Endothelial cell of umbilical vein (primary cell): ENCODE measurements at regions of chr6 and their contacts with region 1.

Region 1: GRCh38 chr6:137271245-137272183 is 52.3 kb upstream of the IFNGR1 start:
- DNase-seq: peak; percentile 72
- H3K4me3 ChIP-seq: no peak overlapping the region
- H3K27ac ChIP-seq: no peak overlapping the region
- H3K4me1 ChIP-seq: no peaks in the 10 kb centered on the region
- H3K27me3 ChIP-seq: peaks cover 3 to 8% of the 10 kb centered on the region in 2 experiments
- CTCF ChIP-seq: peak; percentile 57 to 69
- POLR2A ChIP-seq: no peak

Region 2: GRCh38 chr6:137076277-137077068 is 195.0 kb before region 1 on chr6:
- CTCF ChIA-PET with region 1: no interaction called
- POLR2A ChIA-PET with region 1: no interaction called
- dilution Hi-C with region 1: no loop called
- intact Hi-C with region 1: loop called (anchors 5 kb)
- DNase-seq: peak; percentile 60
- H3K4me3 ChIP-seq: no peak overlapping the region
- H3K27ac ChIP-seq: no peak overlapping the region
- H3K4me1 ChIP-seq: no peaks in the 10 kb centered on the region
- H3K27me3 ChIP-seq: peaks cover 2% of the 10 kb centered on the region in 2 experiments
- CTCF ChIP-seq: peak; percentile 67 to 76
- POLR2A ChIP-seq: no peak

Region 3: DNA sequence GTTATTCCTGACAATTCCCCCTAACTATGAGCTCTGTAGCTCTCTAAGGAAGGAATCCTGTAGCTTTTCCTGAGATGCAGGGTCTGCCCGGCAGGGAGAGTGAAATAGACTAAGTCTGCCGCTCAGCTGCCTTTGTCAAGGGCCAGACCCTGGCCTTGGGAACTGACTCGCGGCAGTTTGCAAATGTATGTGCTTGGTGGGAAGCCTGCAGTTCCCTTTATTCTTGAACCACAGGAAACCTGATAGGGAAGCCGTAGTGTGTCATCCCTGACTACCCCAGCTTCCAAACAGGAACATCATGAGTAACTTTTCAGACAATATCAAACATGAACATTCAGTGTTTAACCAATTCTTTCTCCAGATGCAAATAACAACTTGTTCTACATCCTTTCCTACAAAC is 26.4 kb after region 1 on chr6:
- CTCF ChIA-PET with region 1: interaction called, 12 read pairs
- POLR2A ChIA-PET with region 1: no interaction called
- dilution Hi-C with region 1: no loop called
- intact Hi-C with region 1: no loop called
- DNase-seq: peak; percentile 82
- H3K4me3 ChIP-seq: no peak overlapping the region
- H3K27ac ChIP-seq: peak overlapping the region; percentile 58
- H3K4me1 ChIP-seq: peaks cover 11% of the 10 kb centered on the region
- H3K27me3 ChIP-seq: no peaks in the 10 kb centered on the region
- CTCF ChIP-seq: no peak
- POLR2A ChIP-seq: no peak

Region 4: DNA sequence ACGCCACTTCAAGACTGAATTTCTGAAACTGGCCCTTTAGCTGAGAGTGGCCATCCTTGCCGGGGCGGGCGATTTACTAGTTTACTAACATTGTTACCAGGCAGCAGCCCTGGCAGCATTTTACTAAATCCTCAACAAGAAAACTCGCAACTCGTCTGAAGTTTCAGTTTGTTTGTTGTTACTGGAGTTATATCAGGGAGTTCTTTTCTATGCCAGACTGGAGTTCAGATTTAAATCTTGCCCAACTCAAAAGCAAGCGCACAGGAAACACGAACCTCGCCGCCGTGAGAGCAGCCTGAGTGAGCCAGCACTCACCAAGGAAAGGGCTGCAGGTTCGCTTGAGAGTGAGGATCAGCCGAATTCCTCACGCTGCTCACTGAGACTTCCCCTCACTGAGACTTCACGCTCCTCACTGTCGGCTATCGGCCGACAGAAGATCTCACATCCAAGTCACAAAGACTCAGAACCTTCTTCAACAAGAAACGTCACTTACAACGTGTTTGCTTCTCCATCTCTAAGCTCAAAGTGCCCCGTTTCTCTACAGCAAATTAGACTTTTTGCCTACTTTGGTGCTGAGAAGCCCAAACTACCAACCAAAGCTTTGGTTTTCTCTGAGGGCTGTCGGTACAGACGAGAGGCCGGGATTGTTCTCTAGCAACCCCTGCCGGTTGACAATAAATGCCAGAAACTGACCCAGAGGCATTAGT is 143.8 kb after region 1 on chr6:
- CTCF ChIA-PET with region 1: interaction called, 8 read pairs
- POLR2A ChIA-PET with region 1: no interaction called
- dilution Hi-C with region 1: no loop called
- intact Hi-C with region 1: loop called (anchors 1 kb)
- DNase-seq: peak; percentile 73
- H3K4me3 ChIP-seq: peak overlapping the region in 2 of 3 experiments; percentile 25 to 59
- H3K27ac ChIP-seq: no peak overlapping the region
- H3K4me1 ChIP-seq: no peaks in the 10 kb centered on the region
- H3K27me3 ChIP-seq: peaks cover 19 to 28% of the 10 kb centered on the region in 2 experiments
- CTCF ChIP-seq: peak; percentile 56 to 71
- POLR2A ChIP-seq: no peak

Region 5: GRCh38 chr6:137641474-137642077 is 370.1 kb after region 1 on chr6:
- CTCF ChIA-PET with region 1: interaction called, 18 read pairs
- POLR2A ChIA-PET with region 1: no interaction called
- dilution Hi-C with region 1: no loop called
- intact Hi-C with region 1: loop called (anchors 1 kb)
- DNase-seq: peak; percentile 70
- H3K4me3 ChIP-seq: no peak overlapping the region
- H3K27ac ChIP-seq: no peak overlapping the region
- H3K4me1 ChIP-seq: no peaks in the 10 kb centered on the region
- H3K27me3 ChIP-seq: peaks cover 0 to 3% of the 10 kb centered on the region in 2 experiments
- CTCF ChIP-seq: peak; percentile 55 to 58
- POLR2A ChIP-seq: no peak